Ascending aorta (tissue), 2 donors: ENCODE measurements at regions of chr4 and their contacts with region 1.

Region 1: GRCh38 chr4:175339100-175339707 is 421.0 kb downstream of the ADAM29 start:
- DNase-seq: no peak
- H3K4me3 ChIP-seq: no peak overlapping the region
- H3K27ac ChIP-seq: no peak overlapping the region
- H3K4me1 ChIP-seq: no peaks in the 10 kb centered on the region
- H3K27me3 ChIP-seq: no peaks in the 10 kb centered on the region
- CTCF ChIP-seq: no peak

Region 2: DNA sequence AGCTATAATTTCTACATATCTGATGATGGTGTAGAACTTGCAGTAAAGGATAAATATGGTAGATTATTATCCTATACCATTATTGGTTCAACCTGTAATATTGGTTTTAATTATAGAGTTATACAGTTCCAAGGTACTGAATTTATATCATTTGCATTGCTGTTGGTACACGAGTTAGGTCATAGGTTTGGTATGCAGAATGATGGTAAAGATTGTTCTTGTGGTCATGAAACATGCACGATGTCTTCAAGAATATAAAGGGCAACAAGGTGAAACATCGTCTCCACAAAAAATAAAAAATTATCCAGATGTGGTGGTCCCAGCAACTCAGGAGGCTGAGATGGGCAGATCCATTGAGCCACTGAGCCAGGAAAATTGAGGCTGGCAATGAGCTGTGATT is 321.5 kb before region 1 on chr4:
- intact Hi-C with region 1: no loop called
- DNase-seq: no peak
- H3K4me3 ChIP-seq: no peak overlapping the region
- H3K27ac ChIP-seq: no peak overlapping the region
- H3K4me1 ChIP-seq: no peaks in the 10 kb centered on the region
- H3K27me3 ChIP-seq: no peaks in the 10 kb centered on the region
- CTCF ChIP-seq: no peak

Region 3: GRCh38 chr4:175412746-175413145 is 73.5 kb after region 1 on chr4:
- intact Hi-C with region 1: loop called (anchors 5 kb)
- DNase-seq: no peak
- H3K4me3 ChIP-seq: no peak overlapping the region
- H3K27ac ChIP-seq: no peak overlapping the region
- H3K4me1 ChIP-seq: no peaks in the 10 kb centered on the region
- H3K27me3 ChIP-seq: no peaks in the 10 kb centered on the region
- CTCF ChIP-seq: no peak